Activated CD4-positive, alpha-beta T cell treated with anti-CD3 and anti-CD28 coated beads, Interleukin-2, amount 10 ng/mL, durations not matched to agents 24 days and 14 days (primary cell): ENCODE measurements at regions of chr13 and their contacts with region 1.

Region 1: GRCh38 chr13:40682449-40683240 is 16.2 kb upstream of the FOXO1 start:
- DNase-seq: no peak
- H3K4me3 Mint-ChIP-seq: no peak overlapping the region
- H3K27ac Mint-ChIP-seq: no peak overlapping the region
- H3K4me1 Mint-ChIP-seq: peaks cover 13% of the 10 kb centered on the region
- H3K27me3 Mint-ChIP-seq: no peaks in the 10 kb centered on the region

Region 2: GRCh38 chr13:39684531-39685137 is 998.0 kb before region 1 on chr13:
- intact Hi-C with region 1: loop called (anchors 1 kb)
- DNase-seq: no peak
- H3K4me3 Mint-ChIP-seq: no peak overlapping the region
- H3K27ac Mint-ChIP-seq: no peak overlapping the region
- H3K4me1 Mint-ChIP-seq: peaks cover 18% of the 10 kb centered on the region
- H3K27me3 Mint-ChIP-seq: no peaks in the 10 kb centered on the region

Region 3: GRCh38 chr13:39815345-39816111 is 867.1 kb before region 1 on chr13:
- intact Hi-C with region 1: no loop called
- DNase-seq: no peak
- H3K4me3 Mint-ChIP-seq: no peak overlapping the region
- H3K27ac Mint-ChIP-seq: no peak overlapping the region
- H3K4me1 Mint-ChIP-seq: no peaks in the 10 kb centered on the region
- H3K27me3 Mint-ChIP-seq: no peaks in the 10 kb centered on the region